ENCODE measurements at regions of chr13 and their contacts with region 1.

Region 1: DNA sequence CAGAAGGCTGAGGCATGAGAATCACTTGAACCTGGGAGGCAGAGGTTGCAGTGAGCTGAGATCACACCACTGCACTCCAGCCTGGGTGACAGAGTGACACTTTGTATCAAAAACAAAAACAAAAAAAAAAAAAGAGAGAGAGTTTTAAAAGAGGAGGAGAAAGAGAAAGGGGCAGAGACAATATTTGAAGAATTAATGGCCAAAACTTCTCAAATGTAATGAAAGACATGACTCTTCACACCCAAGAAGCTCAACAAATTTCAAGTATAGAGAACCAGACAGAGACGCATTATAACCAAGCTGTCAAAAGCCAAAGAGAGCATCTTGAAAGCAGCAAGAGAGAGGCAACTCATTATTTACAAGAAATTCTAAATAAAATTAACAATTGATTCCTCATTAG is 36.9 kb upstream of the USP12 start:
- DNase-seq: no peak
- H3K4me3 ChIP-seq: no peak overlapping the region
- H3K27ac ChIP-seq: no peak overlapping the region
- H3K4me1 ChIP-seq: no peaks in the 10 kb centered on the region
- H3K27me3 ChIP-seq: no peaks in the 10 kb centered on the region
- CTCF ChIP-seq: no peak
- EP300 ChIP-seq: no peak
- POLR2A ChIP-seq: no peak

Region 2: DNA sequence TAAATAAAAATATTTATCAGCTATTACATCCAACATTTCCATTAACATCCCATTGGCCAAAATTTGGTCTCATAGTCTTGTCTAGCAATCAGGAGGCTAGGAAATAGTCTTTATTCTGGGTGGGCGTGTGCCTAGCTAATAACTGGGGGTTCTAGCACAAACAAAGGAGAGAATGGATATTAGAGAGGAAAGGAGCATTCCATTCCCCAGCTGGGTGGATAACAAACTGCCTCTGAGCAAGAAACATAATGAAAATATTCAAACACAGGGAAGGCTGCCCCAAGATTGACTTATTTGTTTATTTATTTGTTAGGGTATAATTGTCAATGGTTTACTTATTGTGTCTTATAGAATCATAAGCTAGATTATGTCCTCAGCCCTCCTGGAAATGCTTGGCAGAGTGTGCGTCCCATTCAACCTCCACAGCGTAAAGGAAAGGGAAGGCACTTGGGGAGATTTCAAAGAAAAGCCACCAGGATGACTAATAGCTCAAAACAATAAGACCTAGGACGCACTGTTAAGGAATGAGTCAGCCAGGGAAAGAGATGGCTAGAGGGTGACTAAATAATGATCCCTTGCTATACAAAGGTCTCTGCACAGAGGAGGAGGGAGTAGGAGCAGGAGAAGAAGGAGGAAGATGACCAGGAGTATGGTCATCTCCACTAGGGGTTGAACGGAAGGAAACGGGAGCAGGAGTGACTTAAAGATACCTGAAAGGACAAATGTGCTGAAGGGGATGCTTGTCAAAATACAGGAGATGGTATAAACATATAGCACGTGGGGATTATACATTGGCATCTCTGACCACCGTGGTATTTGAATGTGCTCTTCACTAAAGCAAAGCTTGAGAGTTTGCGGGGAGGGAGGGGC is 13.4 kb before region 1 on chr13:
- in situ Hi-C with region 1: no loop called
- intact Hi-C with region 1: loop called (anchors 2 kb)
- DNase-seq: no peak
- H3K4me3 ChIP-seq: no peak overlapping the region
- H3K27ac ChIP-seq: no peak overlapping the region
- H3K4me1 ChIP-seq: no peaks in the 10 kb centered on the region
- H3K27me3 ChIP-seq: peaks cover 6% of the 10 kb centered on the region
- CTCF ChIP-seq: no peak
- EP300 ChIP-seq: no peak
- POLR2A ChIP-seq: no peak

Region 3: DNA sequence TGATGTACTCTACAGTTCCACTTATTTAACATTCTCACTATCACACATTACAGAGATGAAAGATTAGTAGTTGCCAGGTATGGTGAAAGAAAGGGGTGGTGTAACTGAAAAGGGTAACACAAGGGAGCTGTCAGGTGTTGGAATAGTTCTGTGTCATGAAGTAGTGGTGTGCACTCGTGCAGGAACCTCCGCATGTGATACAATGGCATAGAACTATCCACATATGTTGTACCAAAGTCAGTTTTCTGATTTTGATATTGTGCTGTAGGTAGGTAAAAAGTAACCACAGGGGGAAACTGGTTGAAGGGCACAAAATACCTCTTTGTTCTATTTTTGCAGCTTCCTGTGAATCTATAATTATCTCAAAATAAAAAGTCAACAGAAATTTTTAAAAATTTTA is 18.5 kb after region 1 on chr13:
- in situ Hi-C with region 1: no loop called
- intact Hi-C with region 1: no loop called
- DNase-seq: no peak
- H3K4me3 ChIP-seq: no peak overlapping the region
- H3K27ac ChIP-seq: no peak overlapping the region
- H3K4me1 ChIP-seq: no peaks in the 10 kb centered on the region
- H3K27me3 ChIP-seq: peaks cover 4% of the 10 kb centered on the region
- CTCF ChIP-seq: no peak
- EP300 ChIP-seq: no peak
- POLR2A ChIP-seq: no peak

Measured in transverse colon (tissue), 4 donors.